GM10248 (cell line): ENCODE measurements at regions of chr15 and their contacts with region 1.

Region 1: DNA sequence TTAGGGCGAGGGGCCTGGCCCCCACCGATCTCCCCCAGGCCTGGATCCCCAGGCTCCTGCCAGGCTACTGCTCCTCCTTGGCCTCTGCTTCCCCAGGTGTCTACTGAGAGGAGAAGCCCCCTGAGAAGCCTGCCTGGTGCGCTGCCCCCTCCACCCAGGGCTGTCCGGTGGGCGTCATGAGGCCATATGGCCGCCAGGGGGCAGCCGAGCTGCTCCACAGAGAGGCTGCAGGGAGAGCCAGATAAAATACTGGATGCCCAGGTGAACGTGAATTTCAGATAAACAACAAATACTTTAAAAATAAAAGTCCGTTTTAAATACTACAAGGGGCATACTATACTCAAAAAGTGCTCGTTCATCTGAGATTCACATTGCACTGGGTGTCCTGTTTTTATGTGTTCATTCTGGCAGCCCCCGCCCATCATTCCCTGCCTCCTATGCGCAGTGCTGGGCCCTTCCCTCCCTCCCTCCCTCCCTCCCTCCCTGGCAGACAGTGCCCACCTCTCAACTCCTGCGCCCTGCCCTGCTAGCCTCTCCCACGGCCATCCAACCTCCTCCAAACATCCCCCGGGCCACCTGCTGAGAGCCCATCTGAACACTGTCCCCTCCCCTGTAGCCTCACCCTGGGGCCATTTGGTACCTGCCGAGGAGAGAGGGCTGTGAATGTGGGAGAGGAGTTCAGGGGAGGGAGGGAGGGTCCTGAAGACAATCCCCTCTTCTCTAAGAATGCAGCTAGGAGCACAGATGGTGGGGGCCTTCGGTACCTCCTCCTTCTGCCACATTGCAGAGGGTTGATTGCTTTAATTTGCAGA is 29.6 kb downstream of the PSTPIP1 start:
- DNase-seq: peak; percentile 84
- CTCF ChIP-seq: peak; percentile 93

Region 2: GRCh38 chr15:76840830-76841460 is 183.5 kb before region 1 on chr15:
- CTCF ChIA-PET with region 1: no interaction called
- POLR2A ChIA-PET with region 1: no interaction called
- DNase-seq: peak; percentile 21
- CTCF ChIP-seq: peak; percentile 33

Region 3: GRCh38 chr15:76973362-76973743 is 51.1 kb before region 1 on chr15:
- CTCF ChIA-PET with region 1: interaction called, 88 read pairs
- POLR2A ChIA-PET with region 1: no interaction called
- DNase-seq: peak; percentile 66
- CTCF ChIP-seq: peak; percentile 65

Region 4: GRCh38 chr15:76987926-76988860 is 36.3 kb before region 1 on chr15:
- CTCF ChIA-PET with region 1: interaction called, 17 read pairs
- POLR2A ChIA-PET with region 1: no interaction called
- DNase-seq: peak; percentile 84
- CTCF ChIP-seq: no peak

Region 5: GRCh38 chr15:76994971-76995945 is 29.2 kb before region 1 on chr15 and contains the start of gene PSTPIP1:
- CTCF ChIA-PET with region 1: interaction called, 12 read pairs
- POLR2A ChIA-PET with region 1: no interaction called
- DNase-seq: peak; percentile 64
- CTCF ChIP-seq: no peak

Region 6: GRCh38 chr15:77004189-77004588 is 20.3 kb before region 1 on chr15:
- CTCF ChIA-PET with region 1: interaction called, 41 read pairs
- POLR2A ChIA-PET with region 1: no interaction called
- DNase-seq: no peak
- CTCF ChIP-seq: no peak

Region 7: GRCh38 chr15:77034695-77035489 is 10.4 kb after region 1 on chr15:
- CTCF ChIA-PET with region 1: interaction called, 35 read pairs
- POLR2A ChIA-PET with region 1: no interaction called
- DNase-seq: no peak
- CTCF ChIP-seq: peak; percentile 69

Region 8: DNA sequence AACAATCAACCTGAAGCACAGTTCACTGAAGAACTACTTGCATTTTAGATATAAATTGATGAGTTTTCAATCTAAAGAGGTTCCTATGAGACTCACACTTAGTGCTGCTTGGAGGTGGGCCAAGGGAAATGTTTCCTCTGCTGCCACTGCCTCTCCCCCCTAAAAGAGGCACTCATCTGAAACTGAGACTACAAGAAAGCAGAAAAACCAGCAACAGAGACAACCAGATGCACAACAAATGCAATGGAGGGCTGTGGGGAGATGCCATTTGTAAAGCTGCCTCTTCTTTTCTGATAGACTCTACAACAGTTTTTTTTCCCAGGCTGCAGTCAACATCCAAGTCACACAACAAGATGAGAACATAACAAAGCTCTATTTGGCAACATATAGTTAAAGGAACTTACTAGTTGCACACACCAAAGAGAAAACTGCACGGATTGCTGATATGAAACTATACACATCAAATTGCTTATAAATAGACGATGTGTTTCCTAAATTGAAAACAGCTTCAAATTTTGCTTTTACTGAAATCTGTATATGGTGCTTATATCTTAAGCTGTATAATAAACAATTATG is 35.4 kb after region 1 on chr15:
- CTCF ChIA-PET with region 1: interaction called, 20 read pairs
- POLR2A ChIA-PET with region 1: no interaction called
- DNase-seq: no peak
- CTCF ChIP-seq: no peak